ENCODE measurements at regions of chr2 and their contacts with region 1.

Region 1: GRCh38 chr2:8633735-8634313 is 48.0 kb upstream of the ID2 start:
- DNase-seq: no peak
- H3K4me3 ChIP-seq: no peak overlapping the region
- H3K27ac ChIP-seq: no peak overlapping the region
- H3K4me1 ChIP-seq: peaks cover 0 to 27% (median 19%) of the 10 kb centered on the region in 4 donors
- H3K27me3 ChIP-seq: no peaks in the 10 kb centered on the region
- CTCF ChIP-seq: no peak
- EP300 ChIP-seq: no peak
- POLR2A ChIP-seq: no peak

Region 2: GRCh38 chr2:8551622-8552074 is 82.2 kb before region 1 on chr2:
- intact Hi-C with region 1: no loop called
- DNase-seq: no peak
- H3K4me3 ChIP-seq: no peak overlapping the region
- H3K27ac ChIP-seq: no peak overlapping the region
- H3K4me1 ChIP-seq: no peaks in the 10 kb centered on the region
- H3K27me3 ChIP-seq: no peaks in the 10 kb centered on the region
- CTCF ChIP-seq: no peak
- EP300 ChIP-seq: no peak
- POLR2A ChIP-seq: no peak

Region 3: DNA sequence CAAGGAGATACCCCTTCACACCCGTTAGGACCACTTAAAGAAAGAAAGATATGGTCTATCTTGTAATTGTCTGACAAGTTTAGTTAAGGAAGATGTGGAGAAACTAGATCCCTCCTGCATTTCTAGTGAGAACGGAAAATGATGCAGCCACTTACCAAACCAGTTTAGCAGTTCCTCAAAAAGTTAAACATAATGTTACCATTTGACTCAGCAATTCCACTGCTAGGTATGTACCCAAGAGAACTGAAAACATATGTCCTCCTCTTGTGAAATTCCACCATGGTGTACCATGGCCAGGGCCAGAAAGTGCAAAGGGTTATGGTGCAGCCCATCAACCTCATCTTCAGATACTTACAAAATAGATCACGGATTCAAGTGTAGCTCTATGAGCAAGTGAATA is 31.0 kb before region 1 on chr2:
- intact Hi-C with region 1: loop called (anchors 2 kb)
- DNase-seq: no peak
- H3K4me3 ChIP-seq: no peak overlapping the region
- H3K27ac ChIP-seq: no peak overlapping the region
- H3K4me1 ChIP-seq: no peaks in the 10 kb centered on the region
- H3K27me3 ChIP-seq: no peaks in the 10 kb centered on the region
- CTCF ChIP-seq: no peak
- EP300 ChIP-seq: no peak
- POLR2A ChIP-seq: no peak

Region 4: GRCh38 chr2:8661736-8662135 is 27.9 kb after region 1 on chr2:
- intact Hi-C with region 1: loop called (anchors 2 kb)
- DNase-seq: no peak
- H3K4me3 ChIP-seq: no peak overlapping the region
- H3K27ac ChIP-seq: peak overlapping the region in 3 of 4 donors; percentile 23 to 59 (median 37)
- H3K4me1 ChIP-seq: peaks cover 15 to 22% (median 17%) of the 10 kb centered on the region in 4 donors
- H3K27me3 ChIP-seq: no peaks in the 10 kb centered on the region
- CTCF ChIP-seq: no peak
- EP300 ChIP-seq: no peak
- POLR2A ChIP-seq: no peak